ENCODE measurements at regions of chr3 and their contacts with region 1.

Region 1: DNA sequence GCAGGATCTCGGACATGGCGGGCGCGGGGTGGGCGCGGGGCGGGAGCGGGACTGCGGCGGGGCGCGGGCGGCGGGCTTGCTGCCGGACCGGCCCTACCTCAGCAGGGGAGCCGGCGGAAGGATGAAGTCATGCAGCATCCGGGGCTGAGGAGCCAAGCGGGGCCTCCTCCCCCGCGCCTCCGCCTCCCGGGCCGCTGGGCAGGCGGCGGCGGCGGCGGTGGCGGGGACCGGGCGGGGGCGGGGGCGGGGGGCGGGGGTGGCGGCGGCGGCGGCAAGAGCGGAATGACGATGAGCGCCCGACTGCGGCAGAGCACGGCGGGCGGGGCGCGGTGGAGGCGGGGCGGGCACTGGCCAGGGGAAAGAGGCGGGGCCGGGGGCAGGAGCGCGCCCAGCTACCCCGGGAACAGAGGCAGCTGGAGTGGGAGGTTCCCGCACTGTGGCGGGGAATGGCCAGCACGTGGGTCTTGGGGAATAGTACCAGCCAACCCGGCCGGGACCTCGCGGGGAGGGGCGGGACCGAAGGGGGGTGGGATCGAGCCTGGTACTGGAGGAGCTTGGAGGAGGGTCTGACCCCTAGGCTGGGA is at the start of gene CAMK2N2:
- DNase-seq: peak in 4 of 5 donors; percentile 48 to 70 (median 58)
- H3K4me3 ChIP-seq: peak within 1 kb of the TSS; percentile 61
- H3K4me3 Mint-ChIP-seq: peak within 1 kb of the TSS; percentile 79 to 94 (median 90)
- H3K27ac ChIP-seq: no peak within 1 kb of the TSS
- H3K27ac Mint-ChIP-seq: peak within 1 kb of the TSS; percentile 42 to 92 (median 69)
- H3K4me1 ChIP-seq: peaks cover 23% of the 10 kb centered on the region
- H3K4me1 Mint-ChIP-seq: peaks cover 17 to 29% (median 18%) of the 10 kb centered on the region in 3 donors
- H3K27me3 ChIP-seq: peaks cover 20% of the 10 kb centered on the region
- H3K27me3 Mint-ChIP-seq: peaks cover 19 to 30% of the 10 kb centered on the region in 2 donors
- total RNA-seq, gene CAMK2N2: 0.66 to 0.77 TPM

Region 2: DNA sequence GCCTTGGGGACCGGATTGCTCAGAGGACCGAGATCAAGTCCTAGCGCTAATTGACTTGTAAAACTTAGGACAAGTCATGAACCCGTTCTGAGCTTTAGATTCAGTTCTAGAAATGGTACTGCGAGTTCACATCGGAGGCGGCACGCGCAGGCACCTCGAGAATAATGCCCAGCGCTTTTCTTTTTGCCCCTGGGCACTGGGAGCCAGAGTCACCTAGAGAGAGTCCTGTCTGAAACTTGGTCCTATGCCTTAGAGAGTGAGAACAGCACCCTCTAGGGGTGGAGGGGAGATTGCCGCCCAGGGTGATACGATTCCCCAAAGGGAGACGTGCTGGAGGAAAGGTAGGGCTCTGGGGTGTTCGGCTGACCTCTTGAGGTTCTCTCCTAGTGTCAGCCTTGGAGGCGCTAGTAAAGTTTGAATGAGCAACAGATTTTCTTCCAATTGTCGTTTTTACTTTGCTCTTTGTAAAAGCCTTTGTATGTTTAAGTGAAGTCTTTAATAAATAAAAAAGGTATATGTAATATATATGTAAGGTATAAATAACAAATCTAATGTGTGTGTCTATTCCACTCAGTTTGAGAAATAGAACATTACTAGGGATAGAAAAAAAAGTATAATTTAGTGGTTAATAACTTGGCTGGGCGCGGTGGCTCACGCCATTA is 11.1 kb before region 1 on chr3:
- CTCF ChIA-PET with region 1: interaction called, 13 read pairs
- POLR2A ChIA-PET with region 1: no interaction called
- DNase-seq: peak; percentile 79 to 91 (median 85)
- H3K4me3 ChIP-seq: peak overlapping the region; percentile 94
- H3K4me3 Mint-ChIP-seq: peak overlapping the region; percentile 92 to 98 (median 96)
- H3K27ac ChIP-seq: peak overlapping the region; percentile 41
- H3K27ac Mint-ChIP-seq: peak overlapping the region; percentile 86 to 99 (median 94)
- H3K4me1 ChIP-seq: peaks cover 10% of the 10 kb centered on the region
- H3K4me1 Mint-ChIP-seq: peaks cover 12 to 26% (median 18%) of the 10 kb centered on the region in 3 donors
- H3K27me3 ChIP-seq: no peaks in the 10 kb centered on the region
- H3K27me3 Mint-ChIP-seq: no peaks in the 10 kb centered on the region

Region 3: DNA sequence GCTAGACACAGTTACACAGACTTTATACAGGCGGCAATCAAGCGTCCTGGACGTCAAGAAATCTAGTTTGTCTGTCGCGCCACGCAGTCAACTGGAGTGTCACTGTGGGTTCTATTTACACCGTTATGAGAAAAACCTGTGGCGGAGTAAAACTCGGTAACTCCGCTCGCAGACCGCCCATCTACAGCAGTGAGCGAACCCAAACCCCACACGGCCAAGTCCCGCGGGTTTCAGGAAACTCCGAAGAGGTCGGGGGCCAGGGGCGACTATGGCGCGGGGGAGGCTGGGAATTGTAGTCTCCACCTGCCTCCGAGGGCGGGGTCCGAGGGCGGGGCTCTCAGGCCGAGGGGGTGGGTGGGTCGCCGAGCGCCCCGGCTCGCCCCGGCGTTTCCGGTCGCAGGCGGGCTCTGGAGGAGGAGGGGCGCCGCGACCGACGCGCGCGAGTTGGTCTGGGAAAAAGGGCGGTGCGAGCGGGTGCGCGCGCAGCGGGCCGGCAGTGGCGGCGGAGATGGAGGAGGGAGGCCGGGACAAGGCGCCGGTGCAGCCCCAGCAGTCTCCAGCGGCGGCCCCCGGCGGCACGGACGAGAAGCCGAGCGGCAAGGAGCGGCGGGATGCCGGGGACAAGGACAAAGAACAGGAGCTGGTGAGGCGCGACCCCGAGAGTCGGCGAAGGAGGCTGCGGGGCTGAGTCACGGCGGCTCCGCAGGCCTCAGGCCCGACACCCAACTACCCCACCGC is 37.6 kb after region 1 on chr3 and contains the start of gene PSMD2:
- CTCF ChIA-PET with region 1: no interaction called
- POLR2A ChIA-PET with region 1: no interaction called
- DNase-seq: peak; percentile 95 to 98 (median 98)
- H3K4me3 ChIP-seq: peak within 1 kb of the TSS; percentile 78
- H3K4me3 Mint-ChIP-seq: peak within 1 kb of the TSS; percentile 89 to 96 (median 92)
- H3K27ac ChIP-seq: peak within 1 kb of the TSS; percentile 79
- H3K27ac Mint-ChIP-seq: peak within 1 kb of the TSS; percentile 86 to 95 (median 94)
- H3K4me1 ChIP-seq: peaks cover 14% of the 10 kb centered on the region
- H3K4me1 Mint-ChIP-seq: peaks cover 23 to 36% (median 36%) of the 10 kb centered on the region in 3 donors
- H3K27me3 ChIP-seq: no peaks in the 10 kb centered on the region
- H3K27me3 Mint-ChIP-seq: peaks cover 0 to 4% of the 10 kb centered on the region in 2 donors
- total RNA-seq, gene PSMD2: 334 to 342 TPM